Uterus (tissue), 4 donors: ENCODE measurements at regions of chr1 and their contacts with region 1.

Region 1: GRCh38 chr1:42335050-42335808 is at the start of gene FOXJ3:
- DNase-seq: peak; percentile 89
- H3K4me3 ChIP-seq: peak within 1 kb of the TSS; percentile 94 to 95
- H3K27ac ChIP-seq: peak within 1 kb of the TSS; percentile 89 to 92
- H3K4me1 ChIP-seq: peaks cover 0 to 11% of the 10 kb centered on the region in 2 donors
- H3K27me3 ChIP-seq: no peaks in the 10 kb centered on the region
- CTCF ChIP-seq: peak in 3 of 4 experiments; percentile 5 to 24 (median 17)
- POLR2A ChIP-seq: peak; percentile 23 to 71
- total RNA-seq, gene FOXJ3: 31.2 to 88.4 (median 81.5) TPM

Region 2: DNA sequence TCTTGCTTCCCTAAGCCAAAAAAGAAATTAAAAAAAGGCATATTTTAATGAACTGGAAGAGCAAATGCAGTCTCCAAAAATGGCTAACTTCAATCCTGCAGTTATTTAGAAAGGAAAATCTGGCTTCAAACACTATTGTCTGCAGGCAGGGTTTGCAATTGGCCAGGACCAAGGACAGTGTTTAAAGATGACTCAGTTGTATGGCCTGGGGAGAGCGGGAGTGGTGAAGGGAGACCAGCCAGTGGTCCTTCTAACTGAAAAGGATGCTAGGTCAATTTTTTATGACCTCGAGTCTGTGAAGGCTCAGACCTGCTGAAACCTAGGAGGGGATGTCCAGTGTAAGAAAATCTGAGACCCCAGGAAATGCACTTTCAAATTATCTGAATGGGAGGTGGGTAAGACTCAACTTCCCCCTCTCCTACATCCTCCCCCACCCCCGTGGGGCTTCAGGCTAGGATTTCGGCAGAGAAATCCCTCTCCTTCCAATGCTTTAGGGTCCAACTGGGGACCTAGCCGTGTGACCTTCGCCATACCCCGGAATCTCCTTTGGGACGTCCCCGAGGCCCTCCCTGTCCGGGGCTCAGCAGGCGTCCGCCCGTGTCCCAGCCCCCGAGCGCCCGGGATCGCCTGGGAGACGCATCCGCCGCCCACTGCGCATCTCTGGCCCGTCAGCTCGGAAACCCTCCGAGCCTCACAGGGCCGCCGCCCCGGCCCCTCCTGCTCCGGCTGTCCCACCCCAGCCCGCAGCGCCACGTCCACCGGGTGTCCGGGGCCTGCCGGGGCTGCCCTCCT is 44.8 kb after region 1 on chr1:
- intact Hi-C with region 1: no loop called
- DNase-seq: peak in 1 of 2 donors; percentile 16
- H3K4me3 ChIP-seq: peak overlapping the region; percentile 4 to 43
- H3K27ac ChIP-seq: no peak overlapping the region
- H3K4me1 ChIP-seq: no peaks in the 10 kb centered on the region
- H3K27me3 ChIP-seq: peaks cover 0 to 6% of the 10 kb centered on the region in 2 donors
- CTCF ChIP-seq: no peak
- POLR2A ChIP-seq: no peak

Region 3: DNA sequence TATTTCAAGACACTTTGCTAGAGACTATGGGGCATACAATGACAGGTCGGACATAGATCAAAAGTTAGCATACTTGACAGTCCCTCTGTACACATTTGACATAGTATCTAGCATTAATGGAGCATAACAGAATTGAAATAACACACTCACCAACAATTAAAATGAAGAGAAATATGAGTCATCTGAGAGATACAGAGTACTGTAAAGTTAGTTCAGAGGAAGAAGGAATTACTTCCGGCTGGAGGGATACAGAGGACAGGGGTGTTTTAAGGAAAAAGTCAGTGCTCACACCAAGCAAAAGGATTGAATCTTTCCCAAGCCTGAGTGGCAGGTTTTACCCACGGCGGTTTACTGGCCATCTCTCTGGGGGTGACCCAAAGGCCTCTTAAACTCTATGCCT is 118.2 kb after region 1 on chr1:
- intact Hi-C with region 1: loop called (anchors 5 kb)
- DNase-seq: no peak
- H3K4me3 ChIP-seq: no peak overlapping the region
- H3K27ac ChIP-seq: no peak overlapping the region
- H3K4me1 ChIP-seq: peaks cover 0 to 6% of the 10 kb centered on the region in 2 donors
- H3K27me3 ChIP-seq: no peaks in the 10 kb centered on the region
- CTCF ChIP-seq: no peak
- POLR2A ChIP-seq: no peak